ACHN (cell line): ENCODE measurements at regions of chr12 and their contacts with region 1.

Region 1: DNA sequence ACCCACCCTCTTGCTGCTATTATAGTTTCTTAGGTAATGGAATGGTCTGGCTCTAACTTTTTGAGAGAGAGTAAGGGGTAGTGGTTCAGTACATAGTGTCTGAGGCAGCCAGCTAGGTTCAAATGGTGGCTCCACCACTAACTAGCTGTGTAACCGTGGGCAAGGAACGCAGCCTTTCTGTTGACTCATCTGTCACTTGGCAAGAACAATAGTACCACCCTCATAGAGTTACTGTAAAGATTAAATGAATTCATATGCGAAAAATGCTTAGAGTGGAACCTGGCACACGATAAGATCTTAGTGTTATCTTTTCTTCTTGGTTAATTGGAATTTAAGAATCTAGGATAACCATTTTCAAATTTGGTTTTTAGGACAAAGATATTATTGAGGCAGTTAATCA is 14.0 kb downstream of the CCDC62 start:
- DNase-seq: no peak

Region 2: GRCh38 chr12:122834104-122834920 is 45.9 kb after region 1 on chr12:
- in situ Hi-C with region 1: loop called (anchors 10 kb)
- DNase-seq: peak; percentile 85

Region 3: DNA sequence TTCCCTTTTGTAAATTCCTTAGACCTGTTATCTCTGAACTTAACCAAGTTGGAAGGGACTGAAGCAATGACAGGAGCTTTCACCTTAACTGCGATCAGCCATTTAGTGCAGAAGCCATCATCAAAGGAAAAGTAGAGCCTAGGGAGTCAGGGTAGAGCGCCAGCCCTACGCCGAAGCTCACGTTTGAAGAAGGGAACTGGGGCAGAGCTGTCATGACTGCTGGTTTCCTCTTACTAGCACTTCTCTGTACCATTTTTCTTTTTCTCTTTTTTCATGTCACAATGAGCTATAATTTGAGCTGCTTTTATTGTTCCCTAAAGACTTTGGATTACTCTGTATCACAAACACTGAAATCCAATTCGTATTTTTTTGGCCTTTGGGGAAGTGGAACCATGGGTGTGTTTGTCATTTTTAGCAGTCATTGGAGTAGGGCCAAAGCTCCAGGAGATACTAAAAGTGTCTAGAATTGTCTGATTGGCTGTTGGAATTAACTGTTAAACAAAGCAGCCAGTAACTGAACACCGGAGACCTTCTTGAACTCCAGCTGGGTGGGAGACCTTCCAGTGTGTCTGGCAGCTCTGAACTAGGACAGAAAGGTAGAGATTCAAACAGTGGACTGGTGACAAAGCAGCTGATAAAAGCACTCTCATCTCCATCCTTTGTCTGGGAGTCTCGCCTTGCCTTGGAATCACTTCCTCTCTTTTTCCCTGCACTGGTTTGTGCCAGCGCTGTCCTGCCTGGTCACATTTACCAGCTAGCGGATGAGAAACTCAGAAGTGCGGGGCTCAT is 453.9 kb after region 1 on chr12:
- in situ Hi-C with region 1: no loop called
- DNase-seq: no peak